ENCODE measurements at regions of chr12 and their contacts with region 1.

Region 1: GRCh38 chr12:12611512-12612306 is at the start of gene CREBL2:
- DNase-seq: peak; percentile 93 to 94
- ATAC-seq: peak; percentile 97 to 99 (median 97)
- H3K4me3 ChIP-seq: peak within 1 kb of the TSS; percentile 64 to 89 (median 76)
- H3K27ac ChIP-seq: peak within 1 kb of the TSS; percentile 81 to 97 (median 91)
- H3K4me1 ChIP-seq: peaks cover 0 to 58% (median 24%) of the 10 kb centered on the region in 9 donors
- H3K27me3 ChIP-seq: no peaks in the 10 kb centered on the region
- CTCF ChIP-seq: peak in 1 of 9 donors; percentile 16
- total RNA-seq, gene CREBL2: 15.2 to 26.4 (median 18.6) TPM

Region 2: DNA sequence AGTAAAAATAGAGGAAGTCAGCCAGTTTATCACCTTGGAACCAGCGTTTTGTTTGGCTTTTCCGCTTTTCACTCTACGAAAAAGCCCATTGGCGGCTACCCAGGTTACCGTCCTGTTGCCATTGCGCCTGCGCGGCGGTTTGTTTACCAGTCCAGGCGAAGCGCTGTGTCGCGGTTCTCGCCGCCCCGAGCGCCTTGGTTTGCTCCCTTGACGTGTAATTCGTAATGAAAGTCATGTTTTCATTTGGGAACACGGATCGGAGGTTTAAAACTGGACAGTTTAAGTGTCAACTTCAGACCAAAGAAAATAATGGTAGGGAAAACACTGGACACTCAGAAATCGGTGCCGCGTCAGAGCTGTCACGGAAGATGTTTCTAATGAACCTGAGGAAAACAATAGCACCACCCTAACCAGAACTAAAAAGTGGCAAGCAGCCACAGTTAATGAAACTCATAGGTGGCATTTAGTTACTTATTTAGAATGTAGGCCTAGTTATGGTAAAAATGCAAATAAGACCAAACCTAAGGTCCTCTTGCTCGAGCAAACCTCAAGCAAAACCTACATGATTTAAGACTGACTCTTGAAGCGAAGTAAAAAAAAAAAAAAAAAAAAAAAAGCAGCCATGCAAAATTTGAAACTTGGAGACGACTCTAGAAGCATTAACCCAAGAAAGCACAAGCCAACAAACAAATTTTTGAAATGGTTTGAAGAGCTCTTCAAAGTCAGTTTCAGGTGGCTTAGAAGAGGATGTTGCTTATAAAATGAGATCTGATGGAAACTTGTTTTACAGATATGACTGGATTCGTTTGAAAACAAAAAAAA is 85.1 kb after region 1 on chr12:
- intact Hi-C with region 1: loop called in 2 of 10 experiments (anchors 1 to 5 kb)
- DNase-seq: peak; percentile 91 to 93
- ATAC-seq: peak; percentile 88 to 98 (median 94)
- H3K4me3 ChIP-seq: peak overlapping the region; percentile 35 to 71 (median 62)
- H3K27ac ChIP-seq: peak overlapping the region; percentile 91 to 99 (median 96)
- H3K4me1 ChIP-seq: peaks cover 0 to 17% (median 6%) of the 10 kb centered on the region in 9 donors
- H3K27me3 ChIP-seq: no peaks in the 10 kb centered on the region
- CTCF ChIP-seq: no peak

Region 3: GRCh38 chr12:12724661-12725545 is 113.2 kb after region 1 on chr12:
- intact Hi-C with region 1: no loop called
- DNase-seq: peak; percentile 90 to 96
- ATAC-seq: peak; percentile 82 to 89 (median 86)
- H3K4me3 ChIP-seq: peak overlapping the region; percentile 42 to 90 (median 77)
- H3K27ac ChIP-seq: peak overlapping the region; percentile 95 to 100 (median 98)
- H3K4me1 ChIP-seq: peaks cover 3 to 64% (median 44%) of the 10 kb centered on the region in 9 donors
- H3K27me3 ChIP-seq: no peaks in the 10 kb centered on the region
- CTCF ChIP-seq: peak in 1 of 9 donors; percentile 19

Measured in heart right ventricle (tissue), 16 donors.